RWPE1 (cell line): ENCODE measurements at regions of chr22 and their contacts with region 1.

Region 1: GRCh38 chr22:44473166-44473565 is 24.9 kb downstream of the RTL6 start:
- DNase-seq: no peak
- H3K27ac ChIP-seq: no peak overlapping the region
- CTCF ChIP-seq: no peak

Region 2: DNA sequence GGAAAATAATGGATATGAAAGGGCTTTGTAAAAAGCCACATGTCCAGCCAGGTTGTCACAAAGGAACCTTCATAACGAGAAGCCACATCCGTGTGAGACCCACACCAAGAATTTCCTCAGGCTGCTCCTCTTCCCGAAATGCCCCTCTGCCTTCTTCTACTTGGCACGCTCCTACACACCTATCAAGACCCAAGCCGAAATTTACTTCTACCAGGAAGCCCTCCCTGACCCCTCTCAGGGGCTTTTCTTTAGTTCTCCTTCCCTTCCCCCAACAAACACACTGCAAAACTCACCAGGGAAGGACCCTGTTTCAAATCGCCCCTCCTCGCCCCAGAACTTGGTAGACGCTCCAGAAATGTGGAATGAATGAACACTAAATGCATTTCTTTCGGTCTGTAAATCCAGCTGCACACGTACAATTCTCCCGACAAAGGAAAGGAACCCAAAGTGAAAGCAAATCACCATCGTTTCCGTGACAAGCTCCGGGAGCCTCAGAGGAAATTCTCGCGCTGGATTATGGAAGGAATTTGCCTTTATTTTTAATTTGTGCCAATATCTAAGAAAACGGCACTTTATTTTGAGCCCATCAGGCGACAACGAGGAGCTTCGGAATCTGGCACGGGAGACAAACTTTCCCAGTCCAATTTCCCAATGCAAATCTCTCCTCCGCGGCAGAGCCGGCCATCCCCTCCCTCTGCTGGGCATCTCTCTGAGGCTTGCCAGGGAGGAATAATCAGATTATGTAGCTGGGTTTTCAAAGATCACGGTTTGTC is 147.3 kb before region 1 on chr22:
- CTCF ChIA-PET with region 1: no interaction called
- POLR2A ChIA-PET with region 1: no interaction called
- DNase-seq: no peak
- H3K27ac ChIP-seq: peak overlapping the region; percentile 72
- CTCF ChIP-seq: peak; percentile 25; the same call in 1 of the 2 replicates

Region 3: DNA sequence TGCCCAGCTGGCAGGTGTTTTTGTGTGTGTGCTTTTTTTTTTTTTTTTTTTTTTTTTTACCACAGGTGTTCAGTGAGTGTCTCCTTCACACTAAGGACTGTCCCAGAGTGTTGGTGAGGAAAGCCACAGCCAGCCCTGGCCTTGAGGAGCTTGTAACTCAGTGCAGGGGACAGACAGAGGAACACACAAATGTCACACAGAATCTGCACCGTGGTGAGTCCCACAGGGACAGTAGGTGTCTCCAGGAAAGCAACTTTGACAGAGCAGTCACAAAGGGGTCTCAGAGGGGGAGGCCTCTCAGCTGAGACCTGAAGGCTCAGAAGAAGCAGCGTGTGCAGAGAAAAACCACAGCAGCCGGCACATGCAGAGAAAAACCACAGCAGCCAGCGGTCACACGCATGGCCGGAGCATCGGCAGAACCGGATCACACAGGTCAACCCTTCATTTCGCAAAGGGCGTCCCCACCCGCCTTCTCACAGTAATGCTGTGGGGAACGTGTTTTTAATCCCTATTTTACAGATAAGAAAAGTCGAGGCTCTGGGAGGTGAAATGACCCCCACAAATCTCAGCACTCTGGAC is 127.1 kb after region 1 on chr22:
- CTCF ChIA-PET with region 1: interaction called, 11 read pairs
- POLR2A ChIA-PET with region 1: no interaction called
- DNase-seq: no peak
- H3K27ac ChIP-seq: no peak overlapping the region
- CTCF ChIP-seq: no peak